BJ (cell line): ENCODE measurements at regions of chr14 and their contacts with region 1.

Region 1: DNA sequence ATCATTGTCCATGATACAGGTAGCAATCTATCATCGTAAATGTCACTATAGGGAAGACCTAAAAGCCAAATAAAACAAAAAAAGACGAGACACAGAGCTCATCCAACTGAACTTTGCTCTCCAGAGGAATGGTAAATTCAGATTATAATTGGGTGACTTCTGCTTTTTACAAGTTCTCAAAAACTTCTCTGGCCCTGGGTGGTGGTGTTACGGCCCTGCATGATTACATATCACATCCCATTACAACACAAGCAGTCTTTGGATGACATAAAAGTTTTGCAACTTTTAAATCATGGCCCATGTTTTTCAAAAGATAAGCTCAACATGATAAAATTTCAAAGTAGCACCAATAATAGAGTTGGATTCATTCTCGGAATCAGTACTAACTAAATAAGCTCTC is 299.6 kb downstream of the DIO2 start:
- DNase-seq: no peak
- H3K4me3 ChIP-seq: no peak overlapping the region
- H3K27me3 ChIP-seq: no peaks in the 10 kb centered on the region
- CTCF ChIP-seq: no peak

Region 2: GRCh38 chr14:78083837-78084236 is 1827.9 kb before region 1 on chr14:
- CTCF ChIA-PET with region 1: no interaction called
- POLR2A ChIA-PET with region 1: interaction called, 10 read pairs
- DNase-seq: no peak
- H3K4me3 ChIP-seq: no peak overlapping the region
- H3K27me3 ChIP-seq: no peaks in the 10 kb centered on the region
- CTCF ChIP-seq: no peak

Region 3: GRCh38 chr14:79573486-79573885 is 338.3 kb before region 1 on chr14:
- CTCF ChIA-PET with region 1: no interaction called
- POLR2A ChIA-PET with region 1: no interaction called
- DNase-seq: no peak
- H3K4me3 ChIP-seq: no peak overlapping the region
- H3K27me3 ChIP-seq: no peaks in the 10 kb centered on the region
- CTCF ChIP-seq: no peak

Region 4: GRCh38 chr14:79809849-79810612 is 101.7 kb before region 1 on chr14:
- CTCF ChIA-PET with region 1: no interaction called
- POLR2A ChIA-PET with region 1: no interaction called
- DNase-seq: no peak
- H3K4me3 ChIP-seq: no peak overlapping the region
- H3K27me3 ChIP-seq: no peaks in the 10 kb centered on the region
- CTCF ChIP-seq: peak; percentile 30; the same call in 1 of the 2 replicates

Region 5: DNA sequence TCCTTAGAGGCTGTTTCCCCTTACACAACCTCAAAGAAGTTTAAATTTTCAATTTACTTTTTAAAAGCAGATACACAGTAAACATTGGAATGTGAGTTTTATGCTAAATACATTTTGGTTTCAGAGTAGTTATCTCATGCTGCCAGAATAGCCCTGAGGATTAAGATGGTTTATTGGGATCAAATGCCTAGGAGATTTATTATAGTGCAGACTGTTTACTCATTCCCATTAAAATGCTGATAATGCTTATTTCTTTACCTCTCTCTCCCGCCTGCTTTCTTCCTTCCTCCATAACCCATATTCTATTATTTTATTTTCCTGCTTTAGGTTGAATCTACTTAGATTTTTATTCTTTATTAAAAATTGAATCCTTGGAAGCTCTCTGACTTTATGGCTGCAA is 40.6 kb before region 1 on chr14:
- CTCF ChIA-PET with region 1: no interaction called
- POLR2A ChIA-PET with region 1: no interaction called
- DNase-seq: no peak
- H3K4me3 ChIP-seq: no peak overlapping the region
- H3K27me3 ChIP-seq: no peaks in the 10 kb centered on the region
- CTCF ChIP-seq: no peak